Caco-2 (cell line): ENCODE measurements at regions of chr10 and their contacts with region 1.

Region 1: DNA sequence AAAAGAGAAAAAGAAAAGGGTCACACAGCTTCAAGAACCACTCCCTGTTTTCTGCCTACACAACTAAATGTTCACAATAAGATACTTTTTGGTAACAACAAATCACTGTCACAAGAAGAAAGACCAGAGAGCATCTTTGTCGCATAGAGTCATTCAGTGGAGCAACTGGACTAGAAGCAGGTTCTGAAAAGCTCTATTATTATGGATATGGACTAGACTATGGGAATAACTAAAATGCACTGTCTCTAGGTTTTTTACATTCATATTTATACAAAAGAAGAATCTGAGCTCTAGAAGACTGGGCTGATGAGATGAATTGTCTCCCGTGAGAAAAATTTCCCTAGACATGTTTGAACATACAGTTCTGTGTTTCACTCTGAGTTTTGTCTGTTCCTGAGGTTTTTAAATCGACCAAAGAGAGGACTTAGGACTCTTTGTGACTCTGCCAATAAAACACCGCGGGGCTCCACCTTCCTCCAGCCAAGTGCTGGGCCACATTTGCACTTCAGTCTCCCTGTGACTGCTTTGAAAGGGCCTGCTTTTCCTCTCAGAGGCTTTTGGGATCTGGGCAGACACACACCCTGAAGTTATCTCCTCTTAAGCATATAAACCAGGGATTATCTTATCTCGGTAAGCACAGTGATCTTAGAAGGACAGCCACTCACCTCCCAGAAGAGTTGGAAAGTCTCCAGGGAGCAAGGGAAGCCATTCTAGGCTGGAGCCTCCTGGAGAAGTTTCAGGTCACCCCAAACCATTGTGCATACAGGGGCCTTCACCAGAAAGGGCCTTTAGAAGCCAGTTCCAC is 101.0 kb upstream of the JCAD start:
- DNase-seq: peak; percentile 76 to 87
- H3K4me3 ChIP-seq: no peak overlapping the region
- H3K4me3 Mint-ChIP-seq: no peak overlapping the region
- H3K27ac Mint-ChIP-seq: peak overlapping the region; percentile 4
- H3K4me1 ChIP-seq: peaks cover 30% of the 10 kb centered on the region
- H3K4me1 Mint-ChIP-seq: peaks cover 26% of the 10 kb centered on the region
- H3K27me3 ChIP-seq: no peaks in the 10 kb centered on the region
- H3K27me3 Mint-ChIP-seq: no peaks in the 10 kb centered on the region
- CTCF ChIP-seq: no peak

Region 2: DNA sequence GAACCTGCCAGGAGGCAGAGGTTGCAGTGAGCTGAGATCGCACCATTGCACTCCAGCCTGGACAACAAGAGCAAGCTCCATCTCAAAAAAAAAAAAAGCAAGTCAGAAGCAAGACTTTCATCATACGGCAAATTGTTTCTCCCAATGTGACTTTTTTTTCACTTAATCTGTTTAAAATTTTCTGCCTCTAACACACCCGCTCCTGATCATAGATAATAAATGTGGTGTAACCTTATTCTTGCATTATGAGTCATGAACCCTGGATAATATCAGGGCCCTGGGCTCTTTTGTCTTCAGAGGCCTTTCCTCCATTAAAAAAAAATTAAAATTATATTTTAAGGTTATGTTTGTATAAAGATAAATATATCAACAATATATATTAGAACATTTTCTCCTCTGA is 10.4 kb after region 1 on chr10:
- CTCF ChIA-PET with region 1: no interaction called
- POLR2A ChIA-PET with region 1: no interaction called
- intact Hi-C with region 1: loop called (anchors 1 kb)
- DNase-seq: no peak
- H3K4me3 ChIP-seq: no peak overlapping the region
- H3K4me3 Mint-ChIP-seq: no peak overlapping the region
- H3K27ac Mint-ChIP-seq: peak overlapping the region; percentile 77
- H3K4me1 ChIP-seq: peaks cover 23% of the 10 kb centered on the region
- H3K4me1 Mint-ChIP-seq: peaks cover 33% of the 10 kb centered on the region
- H3K27me3 ChIP-seq: no peaks in the 10 kb centered on the region
- H3K27me3 Mint-ChIP-seq: no peaks in the 10 kb centered on the region
- CTCF ChIP-seq: no peak

Region 3: DNA sequence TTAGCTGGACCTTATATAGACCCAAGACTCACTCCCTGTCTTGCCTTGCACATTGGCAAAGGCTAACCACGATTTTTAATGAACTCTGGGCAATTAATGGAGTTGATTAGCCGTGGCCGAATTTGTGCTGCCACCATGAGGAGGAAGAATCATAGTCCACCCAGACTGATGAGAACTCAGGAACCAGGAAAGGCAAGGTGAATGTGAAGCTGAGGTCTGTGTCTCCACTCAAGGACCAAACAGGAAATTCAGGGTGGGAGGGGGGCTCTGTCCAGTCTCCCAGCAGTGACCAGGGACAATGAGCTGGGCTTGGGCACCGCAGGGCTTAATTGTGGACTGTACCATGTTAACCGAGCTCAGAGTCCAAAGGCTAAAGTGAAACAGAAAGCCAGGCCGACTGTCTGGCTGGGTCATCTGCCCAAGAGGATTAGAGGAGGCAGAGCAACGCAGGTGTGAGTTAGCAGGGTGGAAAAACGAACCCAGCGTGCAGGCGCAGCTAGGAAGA is 26.0 kb after region 1 on chr10:
- CTCF ChIA-PET with region 1: no interaction called
- POLR2A ChIA-PET with region 1: no interaction called
- intact Hi-C with region 1: loop called (anchors 2 kb)
- DNase-seq: peak; percentile 29 to 54
- H3K4me3 ChIP-seq: no peak overlapping the region
- H3K4me3 Mint-ChIP-seq: no peak overlapping the region
- H3K27ac Mint-ChIP-seq: peak overlapping the region; percentile 60
- H3K4me1 ChIP-seq: peaks cover 66% of the 10 kb centered on the region
- H3K4me1 Mint-ChIP-seq: peaks cover 61% of the 10 kb centered on the region
- H3K27me3 ChIP-seq: no peaks in the 10 kb centered on the region
- H3K27me3 Mint-ChIP-seq: no peaks in the 10 kb centered on the region
- CTCF ChIP-seq: no peak